HepG2 (cell line): ENCODE measurements at regions of chr2 and their contacts with region 1.

Region 1: DNA sequence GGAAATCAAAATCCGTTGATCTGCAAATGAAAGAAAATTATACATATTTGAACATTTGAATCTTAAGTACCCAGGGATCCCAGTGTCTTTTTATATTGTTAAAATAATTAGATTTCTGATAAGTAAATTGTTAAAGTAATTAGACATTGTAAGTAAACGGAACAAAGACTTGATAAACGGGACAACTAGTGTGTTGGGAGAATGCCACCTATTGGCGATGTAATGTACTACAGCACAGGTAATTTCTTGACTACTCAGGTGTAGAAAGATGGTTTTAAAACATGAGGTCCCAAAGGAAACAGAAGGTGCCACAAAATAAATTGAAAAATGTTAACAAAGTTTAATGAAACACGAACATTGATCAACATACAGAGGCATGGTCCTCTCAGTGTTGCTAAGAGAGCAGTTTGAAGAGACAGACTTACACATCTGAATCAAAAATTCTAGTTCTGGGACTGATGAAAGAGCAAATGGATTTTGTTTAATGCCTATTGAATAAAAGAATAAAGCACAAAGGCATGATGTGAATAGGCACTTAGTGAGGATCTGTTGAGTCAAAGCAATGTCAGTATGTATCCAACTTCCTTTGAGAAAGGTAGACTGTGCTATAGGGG is 103.4 kb upstream of the RASGRP3 start:
- DNase-seq: peak; percentile 45
- ATAC-seq: peak; percentile 66
- H3K4me3 ChIP-seq: no peak overlapping the region
- H3K27ac ChIP-seq: no peak overlapping the region
- H3K4me1 ChIP-seq: no peaks in the 10 kb centered on the region
- H3K27me3 ChIP-seq: peaks cover 0 to 3% of the 10 kb centered on the region in 2 experiments; a peak in 1 of 5 replicates
- CTCF ChIP-seq: peak; percentile 80
- EP300 ChIP-seq: no peak
- POLR2A ChIP-seq: no peak
- RAD21 ChIP-seq: peak; percentile 35; the same call in 1 of the 2 replicates

Region 2: DNA sequence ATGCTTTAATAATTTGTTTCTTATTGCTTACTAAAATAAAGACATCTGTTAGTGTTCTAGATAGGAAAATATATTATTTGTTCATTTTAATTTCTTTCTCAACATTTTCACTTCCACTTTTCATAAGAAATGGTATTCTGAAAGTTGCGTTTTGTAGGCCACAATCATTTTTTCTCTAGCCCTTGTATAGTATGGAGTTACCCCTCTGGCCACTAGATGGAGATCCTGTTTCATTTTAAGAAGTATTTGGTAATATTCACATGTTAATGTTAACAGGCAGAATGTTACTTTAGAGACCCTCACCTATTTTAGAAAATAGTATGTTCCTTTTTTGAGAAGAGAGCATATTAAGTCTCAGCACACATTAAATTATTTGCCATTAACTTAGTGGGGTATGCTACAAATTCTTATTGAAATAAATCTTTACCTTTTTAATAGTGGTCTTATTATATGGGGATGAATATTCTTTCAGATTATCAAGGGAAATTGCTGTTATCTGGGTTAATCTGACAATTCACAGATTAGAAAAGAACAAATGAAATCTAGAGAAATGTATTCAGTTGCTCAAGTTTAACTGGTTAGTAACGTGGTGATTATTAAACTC is 819.1 kb before region 1 on chr2:
- CTCF ChIA-PET with region 1: no interaction called
- POLR2A ChIA-PET with region 1: no interaction called
- in situ Hi-C with region 1: loop called (anchors 10 kb)
- intact Hi-C with region 1: no loop called
- DNase-seq: peak; percentile 43
- ATAC-seq: peak; percentile 95
- H3K4me3 ChIP-seq: no peak overlapping the region
- H3K27ac ChIP-seq: no peak overlapping the region
- H3K4me1 ChIP-seq: no peaks in the 10 kb centered on the region
- H3K27me3 ChIP-seq: no peaks in the 10 kb centered on the region
- CTCF ChIP-seq: peak; percentile 66
- EP300 ChIP-seq: no peak
- POLR2A ChIP-seq: no peak
- RAD21 ChIP-seq: no peak

Region 3: DNA sequence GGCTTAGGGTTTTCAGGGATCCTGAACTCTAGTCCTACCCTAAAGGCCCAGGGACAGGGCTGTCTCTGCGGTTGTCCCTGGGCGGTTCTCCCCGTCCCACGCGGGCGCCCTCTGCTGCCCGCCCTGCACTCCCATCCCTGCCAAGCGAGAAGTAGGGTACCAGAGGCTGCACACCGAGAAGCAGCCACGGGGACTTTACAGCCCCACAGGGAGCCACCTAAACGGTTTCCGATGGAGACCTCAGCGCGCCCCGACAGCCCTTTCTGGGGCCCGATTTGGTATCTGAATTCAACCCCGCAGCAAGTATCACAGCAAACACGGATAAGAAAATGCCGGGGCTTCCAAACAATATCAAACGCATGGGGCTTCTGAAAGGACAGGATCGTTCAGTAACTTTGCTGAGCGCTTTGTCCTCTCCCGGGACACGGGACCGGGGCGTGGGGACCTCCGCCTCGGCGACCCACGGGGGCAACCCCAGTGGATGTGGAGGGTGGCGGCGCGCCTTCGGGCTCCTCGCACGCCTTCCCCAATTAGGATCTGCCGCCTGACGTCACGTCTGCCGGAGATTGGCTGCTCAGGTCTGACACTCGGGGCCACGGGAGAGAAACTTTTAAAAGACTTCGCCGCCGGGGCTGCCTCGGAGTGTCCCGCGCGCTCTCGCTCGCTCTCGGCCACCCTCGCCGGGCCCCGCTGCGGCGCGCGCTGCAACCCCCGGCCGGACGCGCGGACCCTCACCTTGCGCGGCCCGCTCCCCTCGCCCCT is 426.6 kb before region 1 on chr2 and contains the start of gene LTBP1:
- CTCF ChIA-PET with region 1: no interaction called
- POLR2A ChIA-PET with region 1: no interaction called
- in situ Hi-C with region 1: no loop called
- intact Hi-C with region 1: loop called (anchors 5 kb)
- DNase-seq: peak; percentile 42
- ATAC-seq: peak; percentile 96
- H3K4me3 ChIP-seq: peak within 1 kb of the TSS; percentile 27 to 72 (median 54)
- H3K27ac ChIP-seq: no peak within 1 kb of the TSS
- H3K4me1 ChIP-seq: no peaks in the 10 kb centered on the region
- H3K27me3 ChIP-seq: peaks cover 6 to 35% of the 10 kb centered on the region in 2 experiments; a peak in 4 of 5 replicates
- CTCF ChIP-seq: peak; percentile 92
- EP300 ChIP-seq: no peak
- POLR2A ChIP-seq: no peak
- RAD21 ChIP-seq: peak; percentile 84
- total RNA-seq, gene LTBP1: 0.22 and 0.34 TPM in 2 replicates

Region 4: GRCh38 chr2:33033606-33034081 is 339.4 kb before region 1 on chr2:
- CTCF ChIA-PET with region 1: interaction called, 3 read pairs
- POLR2A ChIA-PET with region 1: no interaction called
- in situ Hi-C with region 1: no loop called
- intact Hi-C with region 1: loop called (anchors 2 kb)
- DNase-seq: no peak
- ATAC-seq: peak; percentile 60; the same call in 2 of the 3 replicates
- H3K4me3 ChIP-seq: no peak overlapping the region
- H3K27ac ChIP-seq: no peak overlapping the region
- H3K4me1 ChIP-seq: no peaks in the 10 kb centered on the region
- H3K27me3 ChIP-seq: peaks cover 0 to 11% of the 10 kb centered on the region in 2 experiments; a peak in 1 of 5 replicates
- CTCF ChIP-seq: peak; percentile 31; the same call in 1 of the 2 replicates
- EP300 ChIP-seq: no peak
- POLR2A ChIP-seq: no peak
- RAD21 ChIP-seq: no peak

Region 5: GRCh38 chr2:33134086-33134771 is 238.8 kb before region 1 on chr2:
- CTCF ChIA-PET with region 1: no interaction called
- POLR2A ChIA-PET with region 1: no interaction called
- in situ Hi-C with region 1: no loop called
- intact Hi-C with region 1: loop called (anchors 10 kb)
- DNase-seq: peak; percentile 67
- ATAC-seq: peak; percentile 87
- H3K4me3 ChIP-seq: no peak overlapping the region
- H3K27ac ChIP-seq: no peak overlapping the region
- H3K4me1 ChIP-seq: peaks cover 14% of the 10 kb centered on the region
- H3K27me3 ChIP-seq: peaks cover 0 to 21% of the 10 kb centered on the region in 2 experiments; a peak in 3 of 5 replicates
- CTCF ChIP-seq: no peak
- EP300 ChIP-seq: no peak
- POLR2A ChIP-seq: no peak
- RAD21 ChIP-seq: no peak

Region 6: GRCh38 chr2:33441235-33441810 is 68.3 kb after region 1 on chr2:
- CTCF ChIA-PET with region 1: no interaction called
- POLR2A ChIA-PET with region 1: no interaction called
- in situ Hi-C with region 1: no loop called
- intact Hi-C with region 1: no loop called
- DNase-seq: peak; percentile 34
- ATAC-seq: peak; percentile 97
- H3K4me3 ChIP-seq: no peak overlapping the region
- H3K27ac ChIP-seq: no peak overlapping the region
- H3K4me1 ChIP-seq: 0 out of 2 replicates have a peak, but pooled peaks cover 6% of the 10 kb centered on the region
- H3K27me3 ChIP-seq: peaks cover 0 to 5% of the 10 kb centered on the region in 2 experiments; a peak in 1 of 5 replicates
- CTCF ChIP-seq: peak; percentile 73
- EP300 ChIP-seq: no peak
- POLR2A ChIP-seq: no peak
- RAD21 ChIP-seq: peak; percentile 65; the same call in 1 of the 2 replicates